ENCODE measurements at regions of chr16 and their contacts with region 1.

Region 1: DNA sequence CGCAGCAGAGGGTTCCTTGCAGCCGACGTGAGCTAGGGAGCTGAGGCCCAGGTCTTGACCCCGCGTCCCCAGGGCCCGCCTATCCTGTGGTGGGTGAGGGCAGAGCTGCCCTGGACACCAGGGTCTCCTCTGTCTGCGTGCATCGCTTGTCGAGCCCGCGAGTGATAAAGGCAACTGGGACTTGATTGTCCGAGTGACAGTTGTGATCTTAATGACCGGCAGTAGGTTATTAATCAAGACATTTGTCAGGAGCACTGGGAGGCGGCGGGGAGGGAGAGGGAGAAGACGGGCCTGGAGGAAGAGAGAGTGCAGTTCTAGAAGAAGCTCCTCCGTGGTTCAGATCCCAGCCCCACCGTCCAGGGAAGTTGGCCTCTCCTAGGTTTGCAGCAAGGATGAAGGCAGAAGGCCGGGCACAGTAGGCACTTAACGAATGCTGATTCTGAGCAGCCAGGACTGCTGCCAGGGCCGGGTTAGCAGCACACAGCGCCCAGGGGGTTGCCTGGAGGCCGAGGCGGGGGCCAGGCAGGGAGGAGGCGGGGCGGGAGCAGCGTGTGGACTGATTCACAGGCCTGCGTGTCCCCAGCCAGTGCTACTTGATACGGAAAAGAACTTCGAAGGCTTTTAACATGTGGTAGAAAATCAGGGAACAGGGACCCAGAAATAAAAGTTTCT is 11.3 kb upstream of the GSE1 start:
- DNase-seq: peak in 5 of 6 donors; percentile 53 to 83 (median 72)
- ATAC-seq: peak; percentile 35 to 60 (median 53)
- H3K4me3 ChIP-seq: no peak overlapping the region
- H3K27ac ChIP-seq: peak overlapping the region; percentile 63 to 73 (median 70)
- H3K4me1 ChIP-seq: peaks cover 32 to 59% (median 45%) of the 10 kb centered on the region in 3 donors
- H3K27me3 ChIP-seq: no peaks in the 10 kb centered on the region
- CTCF ChIP-seq: no peak

Region 2: DNA sequence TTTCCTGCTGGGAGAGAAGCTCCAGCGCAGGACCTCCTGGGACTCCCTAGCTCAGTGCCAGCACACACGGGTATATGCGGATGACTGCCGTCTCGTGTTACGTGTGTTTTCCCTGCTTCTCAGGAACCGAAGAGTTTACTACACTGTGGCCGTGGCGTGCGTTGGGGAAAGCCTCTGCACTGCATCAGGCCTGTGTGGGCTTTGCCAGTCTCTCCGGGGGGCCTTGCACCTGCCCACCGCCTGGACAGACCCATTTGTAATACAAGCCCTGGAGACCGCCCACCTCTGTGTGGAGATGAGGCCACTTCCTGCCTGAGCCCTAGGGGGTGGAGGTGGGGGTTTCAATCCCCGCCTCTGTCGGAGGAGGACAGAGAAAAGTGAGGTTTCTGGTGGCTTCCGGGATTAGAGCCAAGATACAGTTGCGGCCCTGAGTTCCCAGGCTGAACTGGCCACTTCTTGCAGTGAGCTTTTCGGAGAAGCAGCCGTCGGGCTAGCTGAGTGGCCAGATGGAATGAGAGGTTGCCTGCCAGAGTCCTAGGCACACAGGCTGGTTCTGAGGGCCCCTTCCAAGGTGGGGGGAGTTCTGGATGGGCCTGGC is 32.2 kb before region 1 on chr16:
- intact Hi-C with region 1: loop called in 1 of 3 experiments (anchors 5 kb)
- DNase-seq: peak in 3 of 6 donors; percentile 33 to 56 (median 37)
- ATAC-seq: peak; percentile 16 to 41 (median 34)
- H3K4me3 ChIP-seq: no peak overlapping the region
- H3K27ac ChIP-seq: peak overlapping the region; percentile 25 to 76 (median 56)
- H3K4me1 ChIP-seq: peaks cover 24 to 28% (median 26%) of the 10 kb centered on the region in 3 donors
- H3K27me3 ChIP-seq: no peaks in the 10 kb centered on the region
- CTCF ChIP-seq: no peak

Measured in pancreas (tissue), 10 donors.